Activated CD4-positive, alpha-beta T cell treated with anti-CD3 and anti-CD28 coated beads, Interleukin-2, amount 10 ng/mL, durations not matched to agents 24 days and 14 days (primary cell): ENCODE measurements at regions of chr1 and their contacts with region 1.

Region 1: DNA sequence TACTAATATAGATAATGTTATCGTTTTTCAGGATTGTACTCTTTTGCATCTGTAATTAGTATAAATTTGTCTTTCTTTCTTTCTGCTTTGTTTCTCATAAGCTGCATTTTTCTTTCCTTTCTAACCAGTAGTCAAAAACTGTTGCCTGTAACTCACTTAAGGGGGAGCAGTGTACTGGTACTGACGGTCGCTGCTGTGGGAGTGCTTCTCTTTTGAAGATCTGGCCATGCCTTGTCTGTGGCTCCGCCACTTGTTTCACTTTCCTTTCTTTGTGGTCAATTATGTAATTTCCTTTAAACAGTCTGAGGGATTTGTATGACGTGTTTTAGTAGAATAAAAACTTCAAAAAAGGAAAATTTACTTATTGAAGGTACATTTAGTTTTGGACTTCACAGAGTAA is 37.0 kb downstream of the MIA3 start:
- DNase-seq: peak; percentile 92
- H3K4me3 Mint-ChIP-seq: peak overlapping the region; percentile 69
- H3K27ac Mint-ChIP-seq: peak overlapping the region; percentile 86
- H3K4me1 Mint-ChIP-seq: peaks cover 51% of the 10 kb centered on the region
- H3K27me3 Mint-ChIP-seq: no peaks in the 10 kb centered on the region

Region 2: DNA sequence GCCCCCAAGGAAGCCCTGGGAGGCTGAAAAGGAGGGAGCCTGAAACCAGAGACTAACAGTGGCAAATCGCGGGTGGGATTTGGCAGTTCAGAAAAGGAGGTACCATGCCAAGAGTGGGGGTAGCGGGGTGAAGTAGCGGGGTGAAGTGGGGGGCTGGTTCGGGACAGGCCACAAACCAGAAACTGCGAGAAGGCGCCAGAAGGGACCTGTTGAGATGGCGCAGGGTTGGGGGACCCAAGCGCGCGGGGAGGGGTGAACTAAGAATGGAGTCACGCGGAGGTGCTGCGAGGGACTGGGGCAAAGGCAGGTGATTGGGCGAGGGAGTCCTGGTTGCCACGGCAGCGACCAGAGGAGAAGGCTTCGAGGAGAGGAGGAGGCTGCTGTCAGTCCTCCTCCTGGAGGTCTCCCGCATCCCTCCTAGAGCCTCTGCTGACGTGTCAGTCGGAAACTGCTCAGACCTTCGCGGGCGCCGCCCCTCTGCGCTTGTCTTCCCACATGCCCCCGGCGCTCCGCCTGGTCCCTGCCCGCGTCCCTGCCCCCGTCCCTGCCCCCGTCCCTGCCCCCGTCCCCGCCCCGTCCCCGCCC is 37.4 kb before region 1 on chr1:
- intact Hi-C with region 1: loop called (anchors 1 kb)
- DNase-seq: peak; percentile 96
- H3K4me3 Mint-ChIP-seq: peak overlapping the region; percentile 87
- H3K27ac Mint-ChIP-seq: peak overlapping the region; percentile 87
- H3K4me1 Mint-ChIP-seq: peaks cover 32% of the 10 kb centered on the region
- H3K27me3 Mint-ChIP-seq: peaks cover 33% of the 10 kb centered on the region

Region 3: DNA sequence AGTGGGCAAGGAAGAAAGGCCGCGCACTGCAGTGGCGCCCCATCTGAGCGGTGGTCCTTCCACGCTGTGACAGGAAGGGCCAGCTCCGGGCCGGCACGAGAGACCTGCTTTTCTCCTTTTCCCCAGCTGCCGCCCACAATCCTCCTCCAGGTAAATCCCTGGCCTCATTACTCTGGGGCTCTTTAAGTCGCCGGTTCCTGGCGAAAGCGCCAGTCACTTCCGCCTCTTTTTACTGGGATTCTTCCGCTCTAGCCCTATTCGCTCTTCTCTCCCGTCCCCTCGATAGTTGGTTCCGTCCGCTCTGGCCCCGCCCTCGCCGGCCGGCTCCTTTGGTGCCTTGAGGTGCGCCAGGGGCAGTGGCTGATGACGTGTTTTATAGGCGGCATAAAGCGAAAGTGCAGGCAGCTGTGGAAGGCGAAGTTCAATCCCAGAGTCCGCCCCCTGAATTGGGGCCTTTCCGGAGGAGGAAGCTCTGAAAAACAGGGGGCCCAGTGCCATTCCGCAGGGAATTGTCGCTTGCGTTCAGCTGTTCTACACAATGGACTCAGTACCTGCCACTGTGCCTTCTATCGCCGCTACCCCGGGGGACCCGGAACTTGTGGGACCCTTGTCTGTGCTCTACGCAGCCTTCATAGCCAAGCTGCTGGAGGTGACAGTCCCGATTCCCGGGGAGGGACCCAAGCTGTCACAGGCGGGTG is 10.8 kb before region 1 on chr1:
- intact Hi-C with region 1: loop called (anchors 1 kb)
- DNase-seq: peak; percentile 100
- H3K4me3 Mint-ChIP-seq: peak overlapping the region; percentile 95
- H3K27ac Mint-ChIP-seq: peak overlapping the region; percentile 94
- H3K4me1 Mint-ChIP-seq: peaks cover 28% of the 10 kb centered on the region
- H3K27me3 Mint-ChIP-seq: no peaks in the 10 kb centered on the region

Region 4: GRCh38 chr1:222732216-222733159 is 77.6 kb after region 1 on chr1:
- intact Hi-C with region 1: loop called (anchors 2 kb)
- DNase-seq: no peak
- H3K4me3 Mint-ChIP-seq: no peak overlapping the region
- H3K27ac Mint-ChIP-seq: peak overlapping the region; percentile 35
- H3K4me1 Mint-ChIP-seq: peaks cover 17% of the 10 kb centered on the region
- H3K27me3 Mint-ChIP-seq: no peaks in the 10 kb centered on the region

Region 5: GRCh38 chr1:222814536-222815439 is 159.9 kb after region 1 on chr1 and contains the start of gene DISP1:
- intact Hi-C with region 1: loop called (anchors 10 kb)
- DNase-seq: peak; percentile 91
- H3K4me3 Mint-ChIP-seq: peak within 1 kb of the TSS; percentile 95
- H3K27ac Mint-ChIP-seq: peak within 1 kb of the TSS; percentile 95
- H3K4me1 Mint-ChIP-seq: peaks cover 17% of the 10 kb centered on the region
- H3K27me3 Mint-ChIP-seq: peaks cover 9% of the 10 kb centered on the region
- total RNA-seq, gene DISP1: 1.3 and 2.0 TPM in 2 replicates

Region 6: DNA sequence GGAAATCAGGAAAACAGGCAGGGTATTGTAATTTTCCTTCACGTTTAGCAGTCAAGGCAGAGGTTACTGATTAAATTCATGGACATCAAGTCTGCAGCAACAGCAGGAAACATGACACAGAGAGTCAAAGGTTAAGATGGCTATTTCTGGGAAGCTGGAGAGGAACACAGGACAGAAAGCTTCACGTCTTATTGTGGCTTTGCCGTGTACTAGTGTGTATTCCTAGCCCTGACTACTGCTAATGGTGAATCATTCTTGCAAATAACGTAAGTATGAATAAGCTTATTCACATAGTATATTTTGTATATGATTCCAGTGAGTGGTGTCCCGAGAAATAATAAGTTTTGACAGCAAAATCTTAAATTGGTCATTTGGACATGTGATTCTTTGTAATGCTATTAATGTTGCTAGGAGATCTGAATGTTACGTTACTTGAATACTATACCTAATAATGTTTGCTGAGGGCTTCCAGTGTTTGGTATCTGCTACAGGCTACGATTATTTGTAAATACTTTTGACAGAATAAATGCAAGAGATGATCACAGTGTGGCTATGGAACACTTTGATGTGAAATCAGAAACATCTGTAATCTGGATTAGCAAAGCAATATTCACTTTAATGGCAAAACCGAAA is 237.4 kb after region 1 on chr1:
- intact Hi-C with region 1: loop called (anchors 10 kb)
- DNase-seq: no peak
- H3K4me3 Mint-ChIP-seq: no peak overlapping the region
- H3K27ac Mint-ChIP-seq: no peak overlapping the region
- H3K4me1 Mint-ChIP-seq: peaks cover 9% of the 10 kb centered on the region
- H3K27me3 Mint-ChIP-seq: no peaks in the 10 kb centered on the region